ENCODE measurements at regions of chr19 and their contacts with region 1.

Region 1: DNA sequence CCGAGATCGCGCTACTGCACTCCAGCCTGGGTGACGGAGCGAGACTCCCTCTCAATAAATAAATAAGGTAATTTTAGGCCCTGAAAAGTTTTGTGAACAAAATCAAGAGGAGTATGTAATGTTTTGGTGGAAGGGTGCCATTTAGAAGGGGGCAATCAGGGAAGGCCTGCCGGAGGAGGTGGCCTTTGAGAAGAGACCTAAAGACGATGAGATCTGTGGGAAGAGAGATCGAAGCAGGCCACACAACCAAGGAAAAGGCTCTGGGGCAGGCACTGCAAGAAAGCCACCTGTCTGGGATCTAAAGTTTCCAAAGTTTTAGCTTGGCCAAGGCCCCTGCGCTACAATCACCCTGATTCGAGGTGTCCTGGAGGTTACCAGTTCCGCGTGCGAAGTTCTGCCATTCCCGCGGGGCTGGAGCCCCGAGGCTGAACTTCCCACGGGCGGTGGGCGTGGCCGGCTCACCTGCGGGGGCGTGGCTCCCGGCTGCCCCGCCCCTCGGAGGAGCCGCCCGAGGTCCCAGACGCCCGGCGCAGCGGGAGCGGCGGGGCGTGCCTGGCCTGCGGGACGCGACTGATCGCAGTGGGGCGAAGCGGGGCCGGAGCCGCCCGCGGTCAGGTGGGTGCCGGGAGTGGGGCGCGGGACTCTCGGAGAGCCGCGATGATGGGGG is at the start of gene KLC3:
- DNase-seq: no peak
- H3K4me3 ChIP-seq: 0 out of 2 replicates have a peak within 1 kb of the TSS, but pooled peaks have one; percentile 13
- H3K27ac ChIP-seq: no peak within 1 kb of the TSS
- H3K27me3 ChIP-seq: peaks cover 6% of the 10 kb centered on the region
- CTCF ChIP-seq: no peak
- polyA plus RNA-seq, gene KLC3: not detected in 2 replicates

Region 2: GRCh38 chr19:45200568-45200994 is 139.8 kb before region 1 on chr19:
- CTCF ChIA-PET with region 1: interaction called, 16 read pairs
- POLR2A ChIA-PET with region 1: no interaction called
- DNase-seq: no peak
- H3K4me3 ChIP-seq: no peak overlapping the region
- H3K27ac ChIP-seq: no peak overlapping the region
- H3K27me3 ChIP-seq: peaks cover 12% of the 10 kb centered on the region
- CTCF ChIP-seq: peak; percentile 53

Region 3: GRCh38 chr19:45218911-45219743 is 121.2 kb before region 1 on chr19:
- CTCF ChIA-PET with region 1: interaction called, 3 read pairs
- POLR2A ChIA-PET with region 1: interaction called, 10 read pairs
- DNase-seq: no peak
- H3K4me3 ChIP-seq: no peak overlapping the region
- H3K27ac ChIP-seq: no peak overlapping the region
- H3K27me3 ChIP-seq: peaks cover 44% of the 10 kb centered on the region
- CTCF ChIP-seq: no peak

Region 4: DNA sequence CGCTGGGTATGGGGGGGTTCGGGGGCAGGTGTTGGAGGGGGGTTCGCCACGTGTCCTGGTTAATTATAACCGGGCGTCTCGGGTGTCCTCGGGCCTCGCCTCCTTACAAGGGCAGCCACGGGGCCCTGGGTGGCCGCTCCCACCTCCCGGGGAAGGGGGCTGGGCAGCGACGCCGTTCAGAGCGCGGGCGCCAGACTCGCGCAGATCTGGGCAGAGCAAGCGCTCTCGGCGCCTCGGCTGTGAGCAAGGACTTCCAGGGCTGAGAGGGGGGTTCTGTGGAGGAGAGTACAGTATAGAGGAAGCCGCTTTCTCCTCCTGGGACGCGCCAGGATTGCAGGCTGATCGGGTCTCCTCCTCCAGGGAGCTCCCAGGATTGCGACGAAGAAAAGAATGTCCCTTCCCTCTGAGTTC is 16.7 kb before region 1 on chr19:
- CTCF ChIA-PET with region 1: interaction called, 11 read pairs
- POLR2A ChIA-PET with region 1: interaction called, 3 read pairs
- DNase-seq: no peak
- H3K4me3 ChIP-seq: peak overlapping the region; percentile 41
- H3K27ac ChIP-seq: no peak overlapping the region
- H3K27me3 ChIP-seq: peaks cover 24% of the 10 kb centered on the region
- CTCF ChIP-seq: no peak